Right cardiac atrium (tissue), 5 donors: ENCODE measurements at regions of chr17 and their contacts with region 1.

Region 1: GRCh38 chr17:37787055-37787757 is 42.3 kb upstream of the HNF1B start:
- DNase-seq: no peak
- ATAC-seq: peak; percentile 26 to 48
- H3K4me3 ChIP-seq: no peak overlapping the region
- H3K27ac ChIP-seq: no peak overlapping the region
- H3K4me1 ChIP-seq: no peaks in the 10 kb centered on the region
- H3K27me3 ChIP-seq: no peaks in the 10 kb centered on the region

Region 2: GRCh38 chr17:37585066-37585465 is 202.1 kb before region 1 on chr17:
- intact Hi-C with region 1: no loop called
- DNase-seq: no peak
- ATAC-seq: no peak
- H3K4me3 ChIP-seq: no peak overlapping the region
- H3K27ac ChIP-seq: no peak overlapping the region
- H3K4me1 ChIP-seq: no peaks in the 10 kb centered on the region
- H3K27me3 ChIP-seq: no peaks in the 10 kb centered on the region

Region 3: DNA sequence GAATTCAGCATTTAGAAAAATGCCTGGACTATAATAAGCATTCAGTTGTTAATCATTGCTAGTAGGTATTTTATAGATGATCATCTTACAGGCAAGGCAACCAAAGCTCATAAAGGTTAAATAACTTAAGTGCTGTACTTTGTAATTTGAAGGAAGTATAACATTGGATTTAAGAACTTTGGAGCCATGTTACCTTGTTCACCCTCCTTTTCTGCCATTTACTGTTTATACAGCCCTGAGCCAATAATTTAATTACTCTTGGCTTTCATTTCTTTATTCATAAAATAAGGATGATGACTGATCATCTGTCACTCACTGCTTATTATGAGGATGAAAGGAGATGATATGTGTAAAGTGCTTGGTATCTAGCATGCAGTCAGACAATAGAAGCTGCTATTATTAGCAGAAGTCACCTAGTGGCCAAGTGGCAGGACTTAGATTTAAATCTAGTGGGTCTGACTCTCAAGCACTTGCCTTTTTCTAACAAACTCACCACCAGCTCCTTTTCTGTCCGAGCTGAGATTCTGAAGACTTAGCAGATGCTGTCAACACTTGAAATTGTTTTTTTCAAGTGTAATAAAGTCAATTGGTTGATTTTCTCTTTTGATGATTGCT is 125.7 kb before region 1 on chr17:
- intact Hi-C with region 1: loop called in 1 of 4 experiments (anchors 10 kb)
- DNase-seq: no peak
- ATAC-seq: no peak
- H3K4me3 ChIP-seq: no peak overlapping the region
- H3K27ac ChIP-seq: no peak overlapping the region
- H3K4me1 ChIP-seq: no peaks in the 10 kb centered on the region
- H3K27me3 ChIP-seq: no peaks in the 10 kb centered on the region

Region 4: DNA sequence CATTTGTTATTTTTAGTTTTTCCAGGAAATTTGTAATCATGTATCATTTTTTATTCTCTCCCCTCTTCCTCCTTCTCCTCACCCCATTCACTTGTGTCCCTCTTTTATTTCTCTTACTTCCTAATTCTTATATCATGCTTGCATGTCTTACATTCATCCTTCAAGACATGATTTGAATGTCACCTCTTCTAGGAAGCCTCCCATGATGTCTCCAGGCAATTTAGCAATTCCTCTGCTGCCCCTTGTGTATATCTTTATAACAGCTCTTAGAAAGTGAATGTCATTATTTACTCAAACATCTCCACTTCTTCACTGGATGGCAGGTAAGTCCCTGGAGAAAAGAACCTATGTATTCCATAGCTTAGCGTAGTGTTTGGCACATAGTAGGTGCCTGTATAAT is 50.1 kb before region 1 on chr17:
- intact Hi-C with region 1: no loop called
- DNase-seq: no peak
- ATAC-seq: no peak
- H3K4me3 ChIP-seq: no peak overlapping the region
- H3K27ac ChIP-seq: no peak overlapping the region
- H3K4me1 ChIP-seq: no peaks in the 10 kb centered on the region
- H3K27me3 ChIP-seq: peaks cover 3% of the 10 kb centered on the region